Calu3 (cell line): ENCODE measurements at regions of chr4 and their contacts with region 1.

Region 1: DNA sequence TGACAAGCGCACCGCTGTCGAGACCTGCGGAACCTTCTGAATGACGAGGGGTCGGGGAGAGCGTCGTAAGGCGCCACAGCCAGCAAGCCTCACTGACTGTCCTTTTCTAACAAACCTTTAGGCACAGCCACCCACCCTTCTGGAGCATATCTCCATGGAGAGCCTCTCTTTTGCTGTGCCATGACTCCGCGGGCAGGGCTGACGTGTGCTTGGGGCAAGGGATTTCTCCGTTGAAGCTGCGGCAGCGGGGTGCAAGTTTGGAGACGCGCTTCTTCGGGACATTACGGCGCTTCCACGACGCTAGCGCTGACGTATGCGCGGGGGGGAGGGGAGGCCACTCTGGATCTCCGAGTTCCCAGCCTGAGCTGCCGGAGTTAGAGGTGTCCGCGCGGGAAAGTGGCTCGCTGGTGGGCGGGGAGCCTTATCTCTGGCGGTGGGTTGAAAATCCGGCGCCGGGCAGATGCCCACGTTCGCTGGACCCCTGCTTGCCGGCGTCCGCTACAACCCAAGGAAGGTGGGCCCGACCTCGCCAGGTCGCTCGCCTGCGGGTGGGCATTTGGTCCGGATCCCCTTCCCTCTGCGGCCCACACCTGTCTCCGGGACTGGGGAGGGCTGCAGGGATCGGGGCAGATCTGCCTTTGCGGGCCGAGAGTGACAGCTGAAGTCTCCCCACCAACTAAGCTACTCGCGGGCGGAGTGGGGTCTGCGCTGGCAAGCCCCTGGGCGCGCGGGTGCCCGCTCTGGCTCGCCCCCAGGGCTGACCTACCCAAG is 543 bp upstream of the SLC10A7 start:
- DNase-seq: peak; percentile 70
- H3K4me3 Mint-ChIP-seq: no peak overlapping the region
- H3K27ac Mint-ChIP-seq: no peak overlapping the region
- H3K4me1 Mint-ChIP-seq: no peaks in the 10 kb centered on the region
- H3K27me3 Mint-ChIP-seq: no peaks in the 10 kb centered on the region
- CTCF ChIP-seq: no peak

Region 2: GRCh38 chr4:146202665-146203064 is 319.6 kb before region 1 on chr4:
- CTCF ChIA-PET with region 1: no interaction called
- intact Hi-C with region 1: no loop called
- DNase-seq: no peak
- H3K4me3 Mint-ChIP-seq: no peak overlapping the region
- H3K27ac Mint-ChIP-seq: no peak overlapping the region
- H3K4me1 Mint-ChIP-seq: no peaks in the 10 kb centered on the region
- H3K27me3 Mint-ChIP-seq: no peaks in the 10 kb centered on the region
- CTCF ChIP-seq: no peak

Region 3: DNA sequence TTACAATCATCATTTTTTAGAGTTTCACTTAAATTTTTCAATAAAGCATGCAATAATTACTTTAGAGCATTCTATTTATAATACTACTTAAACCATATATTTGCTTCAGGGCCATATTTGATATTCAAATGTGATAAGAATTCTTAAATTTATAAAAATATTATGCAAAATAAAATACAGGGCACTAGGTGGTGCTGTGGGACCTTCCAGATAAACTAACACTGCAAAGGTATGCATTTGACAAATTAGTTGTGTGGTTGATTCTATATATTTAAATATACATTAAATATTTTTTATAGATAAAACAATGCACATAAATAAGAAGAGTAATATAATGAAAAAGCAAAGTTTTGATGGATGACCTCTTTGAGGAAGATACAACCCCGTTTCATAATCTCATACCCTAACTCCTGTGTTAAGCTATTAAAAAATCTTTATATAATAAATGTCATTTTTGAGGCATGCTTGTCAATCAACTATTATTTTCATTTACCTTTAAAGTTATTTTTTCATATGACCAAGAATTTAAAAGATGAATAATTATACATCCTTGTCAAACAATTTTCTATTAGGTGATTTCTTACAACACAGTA is 179.6 kb before region 1 on chr4:
- CTCF ChIA-PET with region 1: no interaction called
- intact Hi-C with region 1: loop called (anchors 5 kb)
- DNase-seq: peak; percentile 19
- H3K4me3 Mint-ChIP-seq: no peak overlapping the region
- H3K27ac Mint-ChIP-seq: no peak overlapping the region
- H3K4me1 Mint-ChIP-seq: no peaks in the 10 kb centered on the region
- H3K27me3 Mint-ChIP-seq: no peaks in the 10 kb centered on the region
- CTCF ChIP-seq: no peak

Region 4: GRCh38 chr4:146450524-146450923 is 71.8 kb before region 1 on chr4:
- CTCF ChIA-PET with region 1: no interaction called
- intact Hi-C with region 1: no loop called
- DNase-seq: no peak
- H3K4me3 Mint-ChIP-seq: no peak overlapping the region
- H3K27ac Mint-ChIP-seq: no peak overlapping the region
- H3K4me1 Mint-ChIP-seq: no peaks in the 10 kb centered on the region
- H3K27me3 Mint-ChIP-seq: no peaks in the 10 kb centered on the region
- CTCF ChIP-seq: no peak